H1 (cell line): ENCODE measurements at regions of chr13 and their contacts with region 1.

Region 1: GRCh38 chr13:51286135-51287002 is 53.1 kb upstream of the SERPINE3 start:
- DNase-seq: peak; percentile 63 to 96
- H3K4me3 ChIP-seq: no peak overlapping the region
- H3K27ac ChIP-seq: no peak overlapping the region
- H3K4me1 ChIP-seq: peaks cover 0 to 3% (median 0%) of the 10 kb centered on the region in 4 experiments; a peak in 2 of 7 replicates
- H3K27me3 ChIP-seq: no peaks in the 10 kb centered on the region
- CTCF ChIP-seq: peak; percentile 86 to 95 (median 92)
- EP300 ChIP-seq: no peak
- POLR2A ChIP-seq: no peak
- RAD21 ChIP-seq: peak; percentile 93

Region 2: DNA sequence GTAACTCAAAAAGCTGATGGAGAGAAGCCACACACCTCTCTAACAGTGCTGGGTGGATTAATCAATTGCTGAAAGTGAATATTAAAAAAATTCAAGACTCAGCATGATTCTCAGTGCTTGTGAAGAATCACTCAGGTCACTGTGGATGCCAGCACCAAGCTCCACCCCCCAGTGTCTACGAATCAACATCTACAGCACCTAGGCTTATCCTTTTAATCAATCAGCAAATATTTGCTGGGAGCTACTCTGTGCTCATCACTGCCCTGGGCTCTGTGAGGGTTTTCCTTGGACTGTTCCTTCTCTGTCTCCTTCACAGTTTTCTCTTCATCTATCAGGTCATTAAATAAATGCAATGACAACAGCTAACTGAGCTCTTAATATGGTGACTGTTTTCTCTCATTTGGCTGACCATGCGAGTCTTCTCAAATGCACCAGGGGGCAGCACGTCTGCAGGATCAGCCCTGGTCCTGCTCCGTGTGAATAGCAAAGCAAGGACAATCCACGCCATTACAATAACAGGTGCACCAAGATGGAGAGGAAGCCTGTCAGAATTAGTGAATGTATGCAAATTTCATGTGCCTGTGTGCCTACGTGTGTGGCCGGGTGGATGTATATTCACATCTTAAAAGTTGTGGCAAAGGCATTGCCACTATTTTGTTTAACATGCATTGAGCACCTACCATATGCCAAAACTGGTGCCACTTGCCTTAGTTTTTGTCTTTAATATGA is 160.7 kb before region 1 on chr13:
- CTCF ChIA-PET with region 1: interaction called, 72 read pairs
- POLR2A ChIA-PET with region 1: interaction called, 3 read pairs
- DNase-seq: peak; percentile 43 to 77
- H3K4me3 ChIP-seq: no peak overlapping the region
- H3K27ac ChIP-seq: no peak overlapping the region
- H3K4me1 ChIP-seq: peaks cover 0 to 19% (median 6%) of the 10 kb centered on the region in 4 experiments; a peak in 5 of 7 replicates
- H3K27me3 ChIP-seq: no peaks in the 10 kb centered on the region
- CTCF ChIP-seq: peak; percentile 85 to 96 (median 89)
- EP300 ChIP-seq: no peak
- POLR2A ChIP-seq: no peak
- RAD21 ChIP-seq: peak; percentile 94 to 95

Region 3: DNA sequence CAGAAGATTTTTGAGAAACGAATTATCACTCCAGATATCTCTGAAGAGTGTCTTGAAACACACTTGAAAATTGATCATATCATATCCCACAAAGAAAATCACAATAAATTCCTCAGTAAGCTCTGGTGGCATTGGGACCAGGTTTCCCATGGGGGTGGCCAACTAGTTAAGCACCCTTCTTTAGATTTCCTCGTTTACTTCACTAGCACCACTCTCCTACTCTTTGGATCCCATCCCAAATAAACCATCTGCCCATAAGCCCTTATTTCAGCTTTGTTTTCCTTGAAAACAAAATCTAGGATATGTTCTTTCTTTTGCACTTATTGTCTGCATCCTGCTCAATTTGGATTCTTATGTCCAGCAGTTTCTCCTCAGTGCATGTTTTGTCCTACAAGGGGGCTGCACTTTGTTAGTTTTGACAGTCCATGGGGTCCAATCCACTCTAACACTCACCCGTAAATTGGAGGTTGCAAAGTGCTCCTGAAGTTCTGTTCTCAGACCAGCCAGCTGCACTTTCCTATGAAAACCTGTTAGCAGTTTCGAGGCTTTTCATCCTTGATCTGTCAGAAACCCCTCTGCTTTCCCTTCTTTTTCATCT is 104.5 kb before region 1 on chr13:
- CTCF ChIA-PET with region 1: interaction called, 6 read pairs
- POLR2A ChIA-PET with region 1: interaction called, 70 read pairs
- DNase-seq: no peak
- H3K4me3 ChIP-seq: no peak overlapping the region
- H3K27ac ChIP-seq: no peak overlapping the region
- H3K4me1 ChIP-seq: peaks cover 0 to 4% (median 1%) of the 10 kb centered on the region in 4 experiments; a peak in 2 of 7 replicates
- H3K27me3 ChIP-seq: no peaks in the 10 kb centered on the region
- CTCF ChIP-seq: no peak
- EP300 ChIP-seq: no peak
- POLR2A ChIP-seq: peak; percentile 6 to 45
- RAD21 ChIP-seq: no peak

Region 4: GRCh38 chr13:51235756-51236490 is 50.4 kb before region 1 on chr13:
- CTCF ChIA-PET with region 1: interaction called, 23 read pairs
- POLR2A ChIA-PET with region 1: interaction called, 3 read pairs
- DNase-seq: no peak
- H3K4me3 ChIP-seq: no peak overlapping the region
- H3K27ac ChIP-seq: peak overlapping the region; percentile 32; the same call in 1 of the 2 replicates
- H3K4me1 ChIP-seq: peaks cover 5 to 13% (median 7%) of the 10 kb centered on the region in 4 experiments; a peak in 5 of 7 replicates
- H3K27me3 ChIP-seq: no peaks in the 10 kb centered on the region
- CTCF ChIP-seq: no peak
- EP300 ChIP-seq: no peak
- POLR2A ChIP-seq: no peak
- RAD21 ChIP-seq: no peak

Region 5: DNA sequence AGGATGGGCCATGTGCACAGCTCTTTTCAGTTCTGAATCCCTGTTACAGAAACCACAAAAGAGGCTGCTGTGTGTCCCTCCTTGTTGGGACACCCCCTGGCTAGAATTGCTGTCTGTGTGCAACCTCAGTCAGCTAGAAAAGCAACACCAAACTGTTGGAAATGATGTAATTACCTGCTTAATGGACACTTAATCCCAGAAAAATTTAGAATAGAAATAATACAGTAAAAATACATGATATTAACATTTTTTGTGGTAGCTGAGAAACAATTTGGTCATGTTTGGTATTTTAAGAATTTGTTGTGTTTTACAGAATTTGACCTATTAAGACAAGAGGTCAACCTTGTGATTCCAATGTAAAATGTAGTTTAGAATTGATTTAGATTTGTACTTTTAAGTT is 17.3 kb before region 1 on chr13:
- CTCF ChIA-PET with region 1: interaction called, 93 read pairs
- POLR2A ChIA-PET with region 1: interaction called, 6 read pairs
- DNase-seq: no peak
- H3K4me3 ChIP-seq: no peak overlapping the region
- H3K27ac ChIP-seq: no peak overlapping the region
- H3K4me1 ChIP-seq: peaks cover 0 to 10% (median 1%) of the 10 kb centered on the region in 4 experiments; a peak in 3 of 7 replicates
- H3K27me3 ChIP-seq: no peaks in the 10 kb centered on the region
- CTCF ChIP-seq: no peak
- EP300 ChIP-seq: no peak
- POLR2A ChIP-seq: no peak
- RAD21 ChIP-seq: no peak

Region 6: DNA sequence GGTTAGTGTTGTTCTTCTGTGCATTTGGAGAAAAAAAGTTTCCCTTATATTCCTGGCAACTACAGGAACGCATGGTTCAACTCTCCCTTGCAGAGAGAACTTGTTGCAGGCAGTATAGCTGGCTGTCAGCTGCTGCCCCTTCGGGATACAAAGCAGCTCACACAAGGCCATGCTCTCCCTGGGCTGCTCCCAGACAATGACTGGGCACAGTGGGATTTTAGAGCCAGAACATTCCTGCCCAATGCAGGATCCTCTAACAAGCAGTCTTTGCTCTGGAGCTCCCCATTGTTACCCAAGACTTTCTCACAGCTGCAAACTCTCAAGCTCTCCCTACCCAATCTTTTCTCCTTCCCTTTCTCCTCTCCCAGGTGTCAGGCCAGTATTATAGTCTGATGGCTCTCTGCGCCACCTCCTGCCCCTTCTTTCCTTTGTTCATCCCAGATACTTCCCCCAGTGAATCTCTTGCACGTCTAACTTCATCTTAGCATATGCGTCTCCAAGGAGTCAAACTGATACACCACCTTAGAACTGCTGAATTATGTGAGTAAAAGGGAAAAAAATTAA is 25.7 kb after region 1 on chr13:
- CTCF ChIA-PET with region 1: interaction called, 23 read pairs
- POLR2A ChIA-PET with region 1: interaction called, 4 read pairs
- DNase-seq: no peak
- H3K4me3 ChIP-seq: no peak overlapping the region
- H3K27ac ChIP-seq: no peak overlapping the region
- H3K4me1 ChIP-seq: peaks cover 4 to 19% (median 6%) of the 10 kb centered on the region in 4 experiments; a peak in 4 of 7 replicates
- H3K27me3 ChIP-seq: no peaks in the 10 kb centered on the region
- CTCF ChIP-seq: no peak
- EP300 ChIP-seq: no peak
- POLR2A ChIP-seq: no peak
- RAD21 ChIP-seq: no peak

Region 7: GRCh38 chr13:51346397-51346796 is 60.0 kb after region 1 on chr13:
- CTCF ChIA-PET with region 1: interaction called, 11 read pairs
- POLR2A ChIA-PET with region 1: no interaction called
- DNase-seq: no peak
- H3K4me3 ChIP-seq: no peak overlapping the region
- H3K27ac ChIP-seq: no peak overlapping the region
- H3K4me1 ChIP-seq: peaks cover 0 to 9% (median 0%) of the 10 kb centered on the region in 4 experiments; a peak in 5 of 7 replicates
- H3K27me3 ChIP-seq: no peaks in the 10 kb centered on the region; a peak in 1 of 7 replicates
- CTCF ChIP-seq: no peak
- EP300 ChIP-seq: no peak
- POLR2A ChIP-seq: no peak
- RAD21 ChIP-seq: no peak